ENCODE measurements at regions of chr17 and their contacts with region 1.

Region 1: DNA sequence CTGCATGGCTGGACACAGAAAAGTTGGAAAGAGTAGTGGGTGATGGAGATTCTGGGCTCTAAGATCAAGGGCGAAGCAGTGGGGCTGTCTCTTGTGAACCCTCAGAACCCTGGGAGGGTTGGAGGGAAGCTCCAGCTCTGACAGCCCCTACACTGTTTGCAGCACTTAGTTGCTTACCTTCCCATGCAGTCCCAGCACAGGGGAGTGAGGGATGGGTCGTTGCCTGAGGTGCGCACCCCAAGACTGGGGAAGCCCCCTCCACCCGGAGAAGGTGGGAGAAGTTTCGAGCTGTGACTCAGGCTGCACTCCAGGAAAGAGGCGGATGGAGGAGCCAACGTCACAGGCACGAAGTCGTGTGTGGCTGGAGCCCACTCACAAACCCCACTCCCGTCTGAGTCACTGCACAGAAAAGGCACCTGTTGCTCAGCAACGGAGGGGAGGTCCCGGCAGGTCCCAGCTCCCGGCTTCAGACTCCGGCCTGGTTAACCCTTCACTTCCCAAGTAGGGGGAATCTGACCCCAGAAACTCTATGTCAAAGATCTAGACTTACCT is 60.1 kb downstream of the AIPL1 start:
- DNase-seq: no peak

Region 2: GRCh38 chr17:5500589-5501391 is 874.0 kb before region 1 on chr17:
- intact Hi-C with region 1: loop called in 1 of 2 experiments (anchors 5 kb)
- DNase-seq: peak; percentile 92

Region 3: DNA sequence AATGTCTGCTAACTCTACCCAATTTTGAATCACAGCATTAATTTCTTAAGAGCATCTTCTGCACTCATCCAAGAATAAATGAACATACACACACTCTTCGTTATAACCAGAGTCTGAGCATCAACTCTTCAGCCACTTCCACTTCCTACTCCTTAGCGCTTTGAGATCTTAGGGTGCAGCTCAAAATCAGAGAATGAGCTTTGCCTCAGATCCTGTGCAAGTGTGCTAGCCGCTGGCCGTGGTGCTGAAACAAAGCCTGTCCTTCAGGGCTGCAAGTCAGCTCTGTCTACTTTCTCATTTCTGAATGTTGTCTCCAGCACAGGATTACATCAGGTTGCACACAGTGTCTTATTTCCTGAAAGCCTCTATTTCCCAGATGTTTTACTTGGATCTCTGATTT is 105.4 kb before region 1 on chr17:
- intact Hi-C with region 1: no loop called
- DNase-seq: no peak

Region 4: GRCh38 chr17:6328279-6328678 is 46.6 kb before region 1 on chr17:
- intact Hi-C with region 1: loop called in 1 of 2 experiments (anchors 1 kb)
- DNase-seq: no peak

Region 5: GRCh38 chr17:6435968-6436367 is 61.1 kb after region 1 on chr17:
- intact Hi-C with region 1: no loop called
- DNase-seq: peak; percentile 89